ENCODE measurements at regions of chr12 and their contacts with region 1.

Region 1: DNA sequence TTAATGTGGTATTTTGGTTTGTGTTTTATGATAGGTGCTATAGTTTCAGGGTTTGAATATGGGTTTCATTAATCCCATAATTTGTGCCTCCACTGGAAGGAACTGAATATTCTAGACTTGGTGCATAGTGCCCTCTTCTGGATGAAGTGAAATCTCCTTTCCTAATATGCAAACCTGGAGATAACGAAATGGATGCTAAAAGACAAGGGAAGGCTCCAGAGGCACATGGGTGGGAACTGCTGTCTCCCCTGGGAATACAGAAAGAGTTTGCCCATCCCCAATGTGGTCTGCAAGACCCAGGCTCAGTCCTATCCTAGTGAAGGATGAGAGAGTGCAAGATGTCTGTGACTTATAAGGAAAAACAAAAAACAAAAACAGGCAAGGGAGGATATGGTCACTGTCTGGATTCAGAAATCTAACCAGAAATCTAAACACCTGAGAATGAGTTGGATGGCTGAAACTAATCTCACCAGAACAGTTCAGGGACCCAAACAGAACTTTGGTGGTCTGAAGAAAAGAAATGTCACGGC is 142.3 kb upstream of the TMPO start:
- DNase-seq: peak in 1 of 2 experiments; percentile 56
- H3K4me3 ChIP-seq: no peak overlapping the region
- H3K4me3 Mint-ChIP-seq: no peak overlapping the region
- H3K27ac Mint-ChIP-seq: no peak overlapping the region
- H3K4me1 ChIP-seq: no peaks in the 10 kb centered on the region
- H3K4me1 Mint-ChIP-seq: peaks cover 7% of the 10 kb centered on the region
- H3K27me3 ChIP-seq: no peaks in the 10 kb centered on the region
- H3K27me3 Mint-ChIP-seq: peaks cover 1% of the 10 kb centered on the region
- CTCF ChIP-seq: peak; percentile 54 to 68

Region 2: GRCh38 chr12:97716356-97716755 is 656.7 kb before region 1 on chr12:
- CTCF ChIA-PET with region 1: no interaction called
- POLR2A ChIA-PET with region 1: no interaction called
- intact Hi-C with region 1: loop called (anchors 5 kb)
- DNase-seq: peak; percentile 33 to 38
- H3K4me3 ChIP-seq: no peak overlapping the region
- H3K4me3 Mint-ChIP-seq: no peak overlapping the region
- H3K27ac Mint-ChIP-seq: no peak overlapping the region
- H3K4me1 ChIP-seq: peaks cover 18% of the 10 kb centered on the region
- H3K4me1 Mint-ChIP-seq: peaks cover 21% of the 10 kb centered on the region
- H3K27me3 ChIP-seq: no peaks in the 10 kb centered on the region
- H3K27me3 Mint-ChIP-seq: no peaks in the 10 kb centered on the region
- CTCF ChIP-seq: peak; percentile 47 to 61

Region 3: GRCh38 chr12:98037401-98038140 is 335.5 kb before region 1 on chr12:
- CTCF ChIA-PET with region 1: no interaction called
- POLR2A ChIA-PET with region 1: no interaction called
- intact Hi-C with region 1: no loop called
- DNase-seq: no peak
- H3K4me3 ChIP-seq: no peak overlapping the region
- H3K4me3 Mint-ChIP-seq: no peak overlapping the region
- H3K27ac Mint-ChIP-seq: no peak overlapping the region
- H3K4me1 ChIP-seq: no peaks in the 10 kb centered on the region
- H3K4me1 Mint-ChIP-seq: no peaks in the 10 kb centered on the region
- H3K27me3 ChIP-seq: no peaks in the 10 kb centered on the region
- H3K27me3 Mint-ChIP-seq: no peaks in the 10 kb centered on the region
- CTCF ChIP-seq: no peak

Region 4: DNA sequence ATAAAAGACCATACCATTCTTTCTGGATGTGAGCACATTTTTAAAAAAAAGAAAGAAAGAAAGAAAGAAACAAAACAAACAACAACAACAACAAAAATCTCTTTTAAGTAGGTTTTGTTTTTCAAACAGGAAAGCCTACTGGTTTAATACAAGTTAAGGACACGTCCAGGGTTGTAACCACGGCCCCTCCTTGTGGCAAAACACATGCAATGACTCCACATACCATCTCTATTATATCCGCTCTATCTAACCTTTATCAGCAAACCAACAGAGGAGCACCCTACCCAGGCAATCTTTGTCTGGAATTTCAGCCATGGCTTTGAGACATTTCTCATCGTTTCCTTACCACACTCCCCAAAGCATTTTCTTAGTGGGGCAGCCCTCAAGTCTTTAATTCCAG is 218.2 kb before region 1 on chr12:
- CTCF ChIA-PET with region 1: no interaction called
- POLR2A ChIA-PET with region 1: no interaction called
- intact Hi-C with region 1: loop called (anchors 1 kb)
- DNase-seq: peak; percentile 68 to 69
- H3K4me3 ChIP-seq: no peak overlapping the region
- H3K4me3 Mint-ChIP-seq: no peak overlapping the region
- H3K27ac Mint-ChIP-seq: no peak overlapping the region
- H3K4me1 ChIP-seq: peaks cover 12% of the 10 kb centered on the region
- H3K4me1 Mint-ChIP-seq: peaks cover 28% of the 10 kb centered on the region
- H3K27me3 ChIP-seq: no peaks in the 10 kb centered on the region
- H3K27me3 Mint-ChIP-seq: no peaks in the 10 kb centered on the region
- CTCF ChIP-seq: peak; percentile 46 to 67

Region 5: GRCh38 chr12:98294051-98294805 is 78.9 kb before region 1 on chr12:
- CTCF ChIA-PET with region 1: interaction called, 4 read pairs
- POLR2A ChIA-PET with region 1: no interaction called
- intact Hi-C with region 1: loop called (anchors 5 kb)
- DNase-seq: no peak
- H3K4me3 ChIP-seq: no peak overlapping the region
- H3K4me3 Mint-ChIP-seq: no peak overlapping the region
- H3K27ac Mint-ChIP-seq: no peak overlapping the region
- H3K4me1 ChIP-seq: no peaks in the 10 kb centered on the region
- H3K4me1 Mint-ChIP-seq: no peaks in the 10 kb centered on the region
- H3K27me3 ChIP-seq: no peaks in the 10 kb centered on the region
- H3K27me3 Mint-ChIP-seq: peaks cover 10% of the 10 kb centered on the region
- CTCF ChIP-seq: no peak